Mammary epithelial cell (primary cell): ENCODE measurements at regions of chr2 and their contacts with region 1.

Region 1: GRCh38 chr2:227471924-227472264 is at the start of gene AGFG1:
- DNase-seq: peak; percentile 75
- H3K4me3 ChIP-seq: peak within 1 kb of the TSS; percentile 97 to 98 (median 97)
- H3K27ac ChIP-seq: peak within 1 kb of the TSS; percentile 82
- H3K4me1 ChIP-seq: peaks cover 23% of the 10 kb centered on the region
- H3K27me3 ChIP-seq: no peaks in the 10 kb centered on the region
- CTCF ChIP-seq: peak; percentile 94 to 97
- total RNA-seq, gene AGFG1: 92.2 to 108 TPM

Region 2: GRCh38 chr2:227415538-227416424 is 56.1 kb before region 1 on chr2:
- CTCF ChIA-PET with region 1: no interaction called
- dilution Hi-C with region 1: loop called (anchors 5 kb)
- in situ Hi-C with region 1: no loop called
- intact Hi-C with region 1: loop called (anchors 2 kb)
- DNase-seq: peak; percentile 81
- H3K4me3 ChIP-seq: no peak overlapping the region
- H3K27ac ChIP-seq: peak overlapping the region; percentile 82
- H3K4me1 ChIP-seq: peaks cover 37% of the 10 kb centered on the region
- H3K27me3 ChIP-seq: no peaks in the 10 kb centered on the region
- CTCF ChIP-seq: no peak

Region 3: DNA sequence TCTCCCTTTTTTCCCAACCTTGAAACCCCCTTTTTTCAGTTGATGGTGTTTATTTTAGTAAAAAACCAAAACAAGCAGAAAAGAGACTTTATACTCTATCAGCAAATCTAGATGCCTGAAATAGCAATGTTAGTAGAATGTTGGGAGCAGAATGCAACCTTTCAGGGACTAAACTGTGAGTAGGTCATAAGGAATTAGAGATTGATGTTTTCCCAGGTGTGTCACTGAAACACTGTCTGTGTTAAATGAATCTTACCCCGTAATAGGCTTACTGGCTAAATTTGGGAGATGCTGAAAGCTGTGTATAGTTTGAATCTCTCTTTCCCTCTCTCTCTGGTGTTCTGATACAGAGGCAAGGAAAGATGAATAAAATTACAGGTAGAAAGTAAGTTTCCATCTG is 43.8 kb after region 1 on chr2:
- CTCF ChIA-PET with region 1: no interaction called
- dilution Hi-C with region 1: no loop called
- in situ Hi-C with region 1: no loop called
- intact Hi-C with region 1: loop called (anchors 5 kb)
- DNase-seq: peak; percentile 36
- H3K4me3 ChIP-seq: no peak overlapping the region
- H3K27ac ChIP-seq: no peak overlapping the region
- H3K4me1 ChIP-seq: peaks cover 7% of the 10 kb centered on the region
- H3K27me3 ChIP-seq: no peaks in the 10 kb centered on the region
- CTCF ChIP-seq: no peak

Region 4: DNA sequence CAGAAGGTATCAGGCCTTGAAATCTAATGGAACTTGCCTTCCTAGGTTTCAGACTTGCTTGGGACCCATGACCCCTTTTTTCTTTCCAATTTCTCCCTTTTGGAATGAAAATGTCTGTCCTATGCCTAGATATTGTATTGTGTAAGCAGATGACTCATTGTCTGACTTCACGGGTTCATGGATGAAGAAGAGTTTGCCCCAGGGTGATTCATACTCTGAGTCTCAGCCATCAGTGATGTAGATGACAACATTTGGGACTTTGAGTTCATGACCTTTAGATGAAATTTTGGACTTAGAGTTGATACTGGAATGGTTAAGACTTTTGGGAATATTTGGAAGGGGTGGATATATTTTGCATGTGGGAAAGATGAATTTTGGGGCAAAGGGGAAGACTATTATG is 183.6 kb after region 1 on chr2:
- CTCF ChIA-PET with region 1: no interaction called
- dilution Hi-C with region 1: no loop called
- in situ Hi-C with region 1: no loop called
- intact Hi-C with region 1: loop called (anchors 5 kb)
- DNase-seq: peak; percentile 82
- H3K4me3 ChIP-seq: no peak overlapping the region
- H3K27ac ChIP-seq: no peak overlapping the region
- H3K4me1 ChIP-seq: peaks cover 13% of the 10 kb centered on the region
- H3K27me3 ChIP-seq: no peaks in the 10 kb centered on the region
- CTCF ChIP-seq: no peak